Psoas muscle (tissue), 8 donors: ENCODE measurements at regions of chr3 and their contacts with region 1.

Region 1: DNA sequence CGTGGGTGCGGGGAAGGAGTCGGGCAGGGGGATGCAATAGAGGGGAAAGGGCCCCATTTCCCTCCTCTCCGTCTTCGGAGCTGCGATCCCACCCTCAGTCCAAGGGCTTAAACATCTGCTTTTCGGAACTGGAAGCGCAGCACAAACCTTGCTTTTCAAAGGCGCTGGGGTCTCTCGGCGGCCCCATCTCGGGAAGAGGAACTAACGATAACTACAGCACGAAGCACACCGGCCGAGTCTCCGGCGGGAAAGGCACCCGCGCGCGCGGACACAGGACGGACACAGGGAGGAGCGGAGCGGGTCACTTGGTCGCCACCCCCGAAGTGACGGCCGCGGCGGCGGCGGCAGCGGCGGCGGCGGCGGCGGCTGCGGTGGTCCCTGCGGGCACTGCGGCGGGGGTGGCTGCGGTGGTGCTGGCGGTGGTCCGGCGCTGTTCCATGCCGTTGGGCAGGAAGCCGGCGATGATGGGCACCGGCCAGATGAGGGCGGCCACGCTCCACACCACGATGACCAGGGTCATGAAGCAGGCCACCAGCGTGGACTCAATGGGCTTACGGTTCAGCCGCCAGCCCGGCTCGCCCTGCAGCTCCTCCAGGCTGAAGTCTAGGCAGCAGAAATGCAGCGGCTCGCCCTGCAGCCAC is 1.1 kb downstream of the TMEM158 start:
- DNase-seq: peak; percentile 74 to 90
- ATAC-seq: peak; percentile 83 to 94 (median 90)
- H3K4me3 ChIP-seq: peak overlapping the region; percentile 68
- H3K27ac ChIP-seq: no peak overlapping the region
- H3K4me1 ChIP-seq: peaks cover 12% of the 10 kb centered on the region
- H3K27me3 ChIP-seq: peaks cover 0 to 14% (median 1%) of the 10 kb centered on the region in 3 donors
- CTCF ChIP-seq: peak; percentile 56

Region 2: GRCh38 chr3:45486136-45486535 is 261.2 kb after region 1 on chr3:
- intact Hi-C with region 1: loop called (anchors 5 kb)
- DNase-seq: no peak
- ATAC-seq: no peak
- H3K4me3 ChIP-seq: no peak overlapping the region
- H3K27ac ChIP-seq: no peak overlapping the region
- H3K4me1 ChIP-seq: no peaks in the 10 kb centered on the region
- H3K27me3 ChIP-seq: no peaks in the 10 kb centered on the region
- CTCF ChIP-seq: no peak

Region 3: GRCh38 chr3:45491344-45491743 is 266.4 kb after region 1 on chr3:
- intact Hi-C with region 1: loop called (anchors 5 kb)
- DNase-seq: no peak
- ATAC-seq: no peak
- H3K4me3 ChIP-seq: no peak overlapping the region
- H3K27ac ChIP-seq: no peak overlapping the region
- H3K4me1 ChIP-seq: peaks cover 4% of the 10 kb centered on the region
- H3K27me3 ChIP-seq: no peaks in the 10 kb centered on the region
- CTCF ChIP-seq: no peak

Region 4: DNA sequence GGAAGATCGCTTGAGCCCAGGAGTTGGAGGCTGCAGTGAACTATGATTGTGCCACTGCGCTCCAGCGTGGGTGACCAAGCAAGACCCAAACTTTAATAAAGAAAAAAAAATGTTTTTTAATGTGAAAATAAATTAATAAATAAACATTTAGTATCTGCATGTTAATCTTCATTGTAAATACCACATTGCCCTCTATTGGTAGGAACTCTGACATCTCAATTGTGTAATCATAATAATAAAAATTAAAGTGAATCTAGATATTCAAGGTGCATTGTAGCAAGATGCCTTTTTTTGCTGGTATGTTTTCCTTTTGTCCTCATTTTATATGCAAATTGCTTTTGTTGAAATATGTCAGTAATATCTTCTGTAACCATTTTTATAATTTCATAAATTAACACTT is 274.6 kb after region 1 on chr3:
- intact Hi-C with region 1: loop called (anchors 1 to 5 kb)
- DNase-seq: no peak
- ATAC-seq: peak in 1 of 4 donors; percentile 35
- H3K4me3 ChIP-seq: no peak overlapping the region
- H3K27ac ChIP-seq: no peak overlapping the region
- H3K4me1 ChIP-seq: peaks cover 32% of the 10 kb centered on the region
- H3K27me3 ChIP-seq: no peaks in the 10 kb centered on the region
- CTCF ChIP-seq: peak; percentile 56

Region 5: GRCh38 chr3:45656575-45657363 is 431.8 kb after region 1 on chr3:
- intact Hi-C with region 1: loop called in 1 of 2 experiments (anchors 10 kb)
- DNase-seq: peak; percentile 93
- ATAC-seq: peak; percentile 86 to 90 (median 88)
- H3K4me3 ChIP-seq: no peak overlapping the region
- H3K27ac ChIP-seq: peak overlapping the region; percentile 66
- H3K4me1 ChIP-seq: peaks cover 59% of the 10 kb centered on the region
- H3K27me3 ChIP-seq: no peaks in the 10 kb centered on the region
- CTCF ChIP-seq: peak; percentile 95